Naive thymus-derived CD4-positive, alpha-beta T cell (primary cell): ENCODE measurements at regions of chr21 and their contacts with region 1.

Region 1: DNA sequence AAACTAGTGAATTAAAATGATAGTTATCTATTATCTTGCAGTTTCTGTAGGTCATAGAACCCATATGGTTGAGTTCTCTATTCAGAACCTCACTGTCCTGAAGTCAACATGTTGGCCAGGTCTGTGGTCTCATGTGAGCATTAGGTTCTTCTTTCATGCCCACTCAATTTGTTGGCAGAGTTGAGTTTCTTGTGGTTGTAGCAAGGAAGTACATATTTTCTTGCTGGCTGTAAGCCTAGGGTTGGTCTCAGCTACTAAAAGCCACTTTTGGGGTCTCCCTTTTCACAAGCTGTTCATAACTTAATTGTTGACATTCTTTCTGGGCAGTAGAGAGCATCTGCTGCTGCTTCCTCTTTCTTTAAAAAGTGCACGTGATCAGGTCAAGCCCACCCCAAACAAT is 1165.1 kb upstream of the NCAM2 start:
- DNase-seq: no peak
- ATAC-seq: no peak
- H3K4me3 ChIP-seq: no peak overlapping the region
- H3K4me3 Mint-ChIP-seq: no peak overlapping the region
- H3K27ac ChIP-seq: no peak overlapping the region
- H3K27ac Mint-ChIP-seq: no peak overlapping the region
- H3K4me1 ChIP-seq: no peaks in the 10 kb centered on the region
- H3K4me1 Mint-ChIP-seq: no peaks in the 10 kb centered on the region
- H3K27me3 ChIP-seq: no peaks in the 10 kb centered on the region
- H3K27me3 Mint-ChIP-seq: no peaks in the 10 kb centered on the region

Region 2: GRCh38 chr21:19776076-19776475 is 57.0 kb before region 1 on chr21:
- CTCF ChIA-PET with region 1: no interaction called
- POLR2A ChIA-PET with region 1: no interaction called
- intact Hi-C with region 1: loop called in 1 of 2 experiments (anchors 10 kb)
- DNase-seq: no peak
- ATAC-seq: no peak
- H3K4me3 ChIP-seq: no peak overlapping the region
- H3K4me3 Mint-ChIP-seq: no peak overlapping the region
- H3K27ac ChIP-seq: no peak overlapping the region
- H3K27ac Mint-ChIP-seq: no peak overlapping the region
- H3K4me1 ChIP-seq: no peaks in the 10 kb centered on the region
- H3K4me1 Mint-ChIP-seq: no peaks in the 10 kb centered on the region
- H3K27me3 ChIP-seq: no peaks in the 10 kb centered on the region
- H3K27me3 Mint-ChIP-seq: no peaks in the 10 kb centered on the region

Region 3: DNA sequence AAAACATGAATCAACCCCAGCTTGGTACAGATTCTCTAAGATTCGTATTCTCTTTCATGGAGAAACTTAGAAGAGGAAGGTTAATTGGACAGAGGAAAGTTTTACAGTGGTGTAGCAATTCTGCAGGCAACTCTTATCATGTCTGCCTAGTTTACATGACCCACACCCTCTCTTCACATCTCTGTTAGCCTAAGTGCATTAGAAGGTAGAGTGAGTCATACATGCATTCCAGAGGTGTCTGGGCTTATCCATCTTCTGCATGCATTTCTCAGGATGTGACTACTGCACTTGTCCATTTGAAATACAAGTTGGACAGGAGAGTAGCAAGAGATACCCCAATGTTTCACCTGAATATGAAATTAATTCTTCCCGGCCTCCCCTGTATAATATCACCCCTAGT is 586.7 kb after region 1 on chr21:
- CTCF ChIA-PET with region 1: no interaction called
- POLR2A ChIA-PET with region 1: no interaction called
- intact Hi-C with region 1: no loop called
- DNase-seq: no peak
- ATAC-seq: no peak
- H3K4me3 ChIP-seq: no peak overlapping the region
- H3K4me3 Mint-ChIP-seq: no peak overlapping the region
- H3K27ac ChIP-seq: no peak overlapping the region
- H3K27ac Mint-ChIP-seq: no peak overlapping the region
- H3K4me1 ChIP-seq: no peaks in the 10 kb centered on the region
- H3K4me1 Mint-ChIP-seq: no peaks in the 10 kb centered on the region
- H3K27me3 ChIP-seq: no peaks in the 10 kb centered on the region
- H3K27me3 Mint-ChIP-seq: no peaks in the 10 kb centered on the region